Psoas muscle (tissue), 8 donors: ENCODE measurements at regions of chr11 and their contacts with region 1.

Region 1: GRCh38 chr11:6619004-6619745 is at the start of gene TPP1:
- DNase-seq: peak; percentile 87 to 92
- ATAC-seq: peak; percentile 97 to 99 (median 98)
- H3K4me3 ChIP-seq: peak within 1 kb of the TSS; percentile 80
- H3K27ac ChIP-seq: peak within 1 kb of the TSS; percentile 89
- H3K4me1 ChIP-seq: peaks cover 21% of the 10 kb centered on the region
- H3K27me3 ChIP-seq: no peaks in the 10 kb centered on the region
- CTCF ChIP-seq: no peak
- total RNA-seq, gene TPP1: 28.0 to 50.2 (median 35.8) TPM

Region 2: GRCh38 chr11:6431861-6432260 is 187.3 kb before region 1 on chr11:
- intact Hi-C with region 1: no loop called
- DNase-seq: no peak
- ATAC-seq: peak in 2 of 4 donors; percentile 20 to 53
- H3K4me3 ChIP-seq: no peak overlapping the region
- H3K27ac ChIP-seq: no peak overlapping the region
- H3K4me1 ChIP-seq: no peaks in the 10 kb centered on the region
- H3K27me3 ChIP-seq: no peaks in the 10 kb centered on the region
- CTCF ChIP-seq: no peak

Region 3: GRCh38 chr11:6473481-6474422 is 145.4 kb before region 1 on chr11 and contains the start of gene TRIM3:
- intact Hi-C with region 1: loop called in 1 of 2 experiments (anchors 5 kb)
- DNase-seq: peak; percentile 96 to 97
- ATAC-seq: peak; percentile 91 to 95 (median 92)
- H3K4me3 ChIP-seq: peak within 1 kb of the TSS; percentile 91
- H3K27ac ChIP-seq: peak within 1 kb of the TSS; percentile 93
- H3K4me1 ChIP-seq: peaks cover 15% of the 10 kb centered on the region
- H3K27me3 ChIP-seq: no peaks in the 10 kb centered on the region
- CTCF ChIP-seq: no peak
- total RNA-seq, gene TRIM3: 9.6 to 15.3 (median 12.7) TPM

Region 4: GRCh38 chr11:6603287-6604080 is 15.7 kb before region 1 on chr11 and contains the starts of genes ILK and RRP8:
- intact Hi-C with region 1: no loop called
- DNase-seq: peak; percentile 91 to 96
- ATAC-seq: peak; percentile 91 to 95 (median 94)
- H3K4me3 ChIP-seq: peak within 1 kb of the TSS; percentile 75
- H3K27ac ChIP-seq: peak within 1 kb of the TSS; percentile 100
- H3K4me1 ChIP-seq: peaks cover 52% of the 10 kb centered on the region
- H3K27me3 ChIP-seq: no peaks in the 10 kb centered on the region
- CTCF ChIP-seq: peak; percentile 19
- total RNA-seq, gene ILK: 68.3 to 96.6 (median 84.3) TPM
- total RNA-seq, gene RRP8: 11.6 to 18.6 (median 15.5) TPM

Region 5: DNA sequence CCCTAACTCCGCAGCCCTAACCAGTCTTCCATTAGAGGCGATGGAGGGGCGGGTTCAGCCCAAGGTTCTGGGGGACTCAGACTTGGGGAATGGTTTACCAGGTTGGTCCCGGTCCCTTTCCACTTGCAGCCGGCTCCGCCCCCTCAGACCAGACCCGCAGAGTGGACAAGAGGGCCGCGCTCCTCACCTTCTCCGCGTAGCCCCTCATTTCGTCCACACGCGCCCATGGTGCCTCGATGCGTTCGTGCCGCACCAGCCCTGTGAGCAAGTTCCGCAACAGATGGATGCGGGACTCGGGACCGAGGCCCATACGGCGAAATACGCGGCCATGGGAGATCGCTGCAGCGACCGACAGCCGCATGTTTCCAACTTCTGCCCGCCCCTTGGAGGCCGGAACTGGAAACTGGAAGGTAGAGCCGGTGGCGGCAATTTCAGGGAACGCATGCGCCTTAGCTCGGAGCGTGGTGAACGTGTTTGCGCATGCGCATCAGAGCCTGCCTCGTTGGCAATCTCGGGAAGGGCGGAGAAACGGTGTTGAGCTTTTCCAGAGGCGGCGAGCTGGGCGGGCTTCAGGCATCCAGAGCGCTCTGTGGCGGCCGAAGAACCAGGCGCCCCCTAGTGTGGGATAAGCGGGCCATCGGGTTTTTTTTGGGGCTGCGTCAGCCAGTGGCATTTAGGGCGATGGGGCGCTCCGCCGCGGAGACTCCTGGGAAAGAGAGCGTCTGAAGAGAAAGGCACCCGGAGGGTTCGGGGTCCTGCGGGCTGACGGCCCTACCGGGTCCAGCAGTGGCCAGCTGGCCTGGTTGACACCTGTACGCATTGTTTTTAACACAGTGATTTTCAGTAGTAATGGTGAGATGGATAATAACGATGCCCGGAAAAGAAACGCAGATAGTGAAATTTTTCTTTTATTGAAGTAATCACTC is 64.0 kb after region 1 on chr11 and contains the start of gene MRPL17:
- intact Hi-C with region 1: loop called (anchors 2 to 5 kb)
- DNase-seq: peak; percentile 99 to 100
- ATAC-seq: peak; percentile 97 to 99 (median 98)
- H3K4me3 ChIP-seq: peak within 1 kb of the TSS; percentile 96
- H3K27ac ChIP-seq: peak within 1 kb of the TSS; percentile 82
- H3K4me1 ChIP-seq: peaks cover 14% of the 10 kb centered on the region
- H3K27me3 ChIP-seq: no peaks in the 10 kb centered on the region
- CTCF ChIP-seq: peak; percentile 85
- total RNA-seq, gene MRPL17: 27.2 to 44.8 (median 38.8) TPM